Motor neuron (in vitro differentiated cells): ENCODE measurements at regions of chr10 and their contacts with region 1.

Region 1: GRCh38 chr10:76559892-76560220 is 1077.8 kb downstream of the KCNMA1 start:
- ATAC-seq: peak in 1 of 8 experiments; percentile 7
- H3K4me3 ChIP-seq: no peak overlapping the region
- H3K27ac ChIP-seq: no peak overlapping the region
- H3K4me1 ChIP-seq: peaks cover 2 to 20% of the 10 kb centered on the region in 2 donors

Region 2: DNA sequence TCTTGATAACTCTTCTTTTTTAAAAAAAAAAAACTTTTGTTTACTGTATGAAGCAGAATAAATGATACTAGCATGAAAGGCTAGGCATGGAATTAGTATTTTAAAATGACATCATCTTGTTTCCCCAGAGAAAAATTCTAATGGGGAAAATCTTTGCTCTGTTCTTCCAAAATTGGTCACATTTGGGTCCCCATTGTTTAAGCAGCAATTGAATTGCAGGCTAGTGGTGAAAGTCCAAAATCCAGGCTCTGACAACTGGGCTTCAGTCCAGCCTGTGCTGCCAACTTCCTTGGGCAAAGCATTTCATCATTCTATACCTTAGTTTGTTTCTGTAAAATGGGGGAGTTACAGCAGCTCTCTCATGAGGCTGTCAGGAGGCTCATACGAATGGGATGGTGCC is 351.3 kb after region 1 on chr10:
- in situ Hi-C with region 1: no loop called
- ATAC-seq: no peak
- H3K4me3 ChIP-seq: no peak overlapping the region
- H3K27ac ChIP-seq: no peak overlapping the region
- H3K4me1 ChIP-seq: peaks cover 0 to 8% of the 10 kb centered on the region in 2 donors

Region 3: GRCh38 chr10:76946270-76946669 is 386.4 kb after region 1 on chr10:
- in situ Hi-C with region 1: no loop called
- ATAC-seq: no peak
- H3K4me3 ChIP-seq: no peak overlapping the region
- H3K27ac ChIP-seq: no peak overlapping the region
- H3K4me1 ChIP-seq: peaks cover 7 to 12% of the 10 kb centered on the region in 2 donors

Region 4: DNA sequence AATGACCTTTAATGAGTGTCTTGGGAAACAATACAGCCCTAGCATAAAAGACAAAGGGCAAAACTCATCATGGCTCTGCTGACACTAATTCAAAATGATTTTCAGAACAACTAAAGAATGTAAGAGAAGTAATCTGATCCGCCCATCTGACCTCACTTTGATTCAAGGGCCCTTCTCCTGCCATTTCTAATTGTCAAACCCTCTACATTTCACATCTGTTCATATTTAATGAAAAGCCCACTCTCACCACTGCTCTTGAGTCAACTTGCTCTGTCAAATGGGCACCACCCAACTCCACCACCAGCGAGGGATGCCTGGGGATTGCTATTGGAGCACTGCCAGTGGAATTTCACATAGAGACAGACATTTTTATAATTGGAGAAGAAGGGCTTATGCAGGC is 438.6 kb after region 1 on chr10:
- in situ Hi-C with region 1: loop called in 1 of 9 experiments (anchors 10 kb)
- ATAC-seq: peak in 3 of 8 experiments; percentile 15 to 24 (median 16)
- H3K4me3 ChIP-seq: no peak overlapping the region
- H3K27ac ChIP-seq: no peak overlapping the region
- H3K4me1 ChIP-seq: peaks cover 2 to 30% of the 10 kb centered on the region in 2 donors